Activated naive CD8-positive, alpha-beta T cell treated with anti-CD3 and anti-CD28 coated beads, Interleukin-2, amount 10 ng/mL, durations not matched to agents 7 days and 5 days (primary cell): ENCODE measurements at regions of chr9 and their contacts with region 1.

Region 1: DNA sequence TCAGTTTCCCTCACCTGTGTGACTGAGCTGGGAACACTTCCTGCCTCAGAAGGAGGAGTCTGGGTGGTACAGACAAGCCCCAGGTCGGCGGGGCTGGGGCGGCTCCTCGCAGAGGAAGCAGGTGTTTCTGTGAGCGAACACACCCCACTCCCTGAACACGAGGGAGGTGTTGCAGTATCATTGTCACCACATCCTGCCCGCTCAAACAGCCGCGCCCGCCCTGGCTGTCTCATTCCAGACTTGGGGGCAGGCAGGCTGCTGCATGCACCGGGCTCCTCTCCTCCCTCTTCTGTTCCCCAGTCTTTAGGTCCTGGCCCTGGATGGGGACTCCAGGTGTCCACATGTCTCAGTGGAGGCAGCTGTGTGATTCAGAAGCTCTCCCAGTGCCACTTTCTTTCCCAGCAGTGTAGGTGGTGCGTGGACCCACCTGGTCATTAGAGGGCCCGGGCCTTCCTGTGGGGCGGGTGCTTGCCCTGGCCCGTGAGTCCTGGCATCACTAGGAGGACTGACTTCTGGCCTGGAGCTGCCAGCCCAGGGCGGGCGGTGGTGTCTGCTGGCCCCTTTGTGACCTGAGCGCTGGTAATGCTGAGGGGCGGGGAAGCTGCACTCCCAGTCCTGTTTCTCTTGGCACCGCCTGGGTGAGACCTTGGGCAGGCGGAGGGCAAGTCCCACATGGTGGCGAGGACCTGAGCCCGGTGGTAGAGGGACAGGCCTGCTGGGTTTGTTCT is 18.3 kb upstream of the PHYHD1 start:
- DNase-seq: peak; percentile 87
- ATAC-seq: peak; percentile 87
- H3K4me3 Mint-ChIP-seq: peak overlapping the region; percentile 81
- H3K27ac Mint-ChIP-seq: peak overlapping the region; percentile 99
- H3K4me1 Mint-ChIP-seq: peaks cover 56% of the 10 kb centered on the region
- H3K27me3 Mint-ChIP-seq: no peaks in the 10 kb centered on the region

Region 2: GRCh38 chr9:128881901-128882681 is 20.4 kb before region 1 on chr9 and contains the starts of genes KYAT1 and LRRC8A:
- POLR2A ChIA-PET with region 1: interaction called, 34 read pairs
- DNase-seq: peak; percentile 99
- ATAC-seq: peak; percentile 95
- H3K4me3 Mint-ChIP-seq: peak within 1 kb of the TSS; percentile 99
- H3K27ac Mint-ChIP-seq: peak within 1 kb of the TSS; percentile 96
- H3K4me1 Mint-ChIP-seq: peaks cover 36% of the 10 kb centered on the region
- H3K27me3 Mint-ChIP-seq: no peaks in the 10 kb centered on the region
- total RNA-seq, gene KYAT1: 14.9 to 16.3 TPM
- total RNA-seq, gene LRRC8A: 24.1 to 25.9 TPM